GM23248 (cell line): ENCODE measurements at regions of chr9 and their contacts with region 1.

Region 1: GRCh38 chr9:124420991-124421543 is 5.8 kb upstream of the PSMB7 start:
- DNase-seq: peak; percentile 23
- H3K4me3 ChIP-seq: no peak overlapping the region
- H3K27ac ChIP-seq: no peak overlapping the region
- H3K4me1 ChIP-seq: no peaks in the 10 kb centered on the region
- H3K27me3 ChIP-seq: no peaks in the 10 kb centered on the region

Region 2: GRCh38 chr9:124098141-124099090 is 322.7 kb before region 1 on chr9:
- in situ Hi-C with region 1: no loop called
- DNase-seq: no peak
- H3K4me3 ChIP-seq: no peak overlapping the region
- H3K27ac ChIP-seq: no peak overlapping the region
- H3K4me1 ChIP-seq: no peaks in the 10 kb centered on the region
- H3K27me3 ChIP-seq: peaks cover 31% of the 10 kb centered on the region

Region 3: DNA sequence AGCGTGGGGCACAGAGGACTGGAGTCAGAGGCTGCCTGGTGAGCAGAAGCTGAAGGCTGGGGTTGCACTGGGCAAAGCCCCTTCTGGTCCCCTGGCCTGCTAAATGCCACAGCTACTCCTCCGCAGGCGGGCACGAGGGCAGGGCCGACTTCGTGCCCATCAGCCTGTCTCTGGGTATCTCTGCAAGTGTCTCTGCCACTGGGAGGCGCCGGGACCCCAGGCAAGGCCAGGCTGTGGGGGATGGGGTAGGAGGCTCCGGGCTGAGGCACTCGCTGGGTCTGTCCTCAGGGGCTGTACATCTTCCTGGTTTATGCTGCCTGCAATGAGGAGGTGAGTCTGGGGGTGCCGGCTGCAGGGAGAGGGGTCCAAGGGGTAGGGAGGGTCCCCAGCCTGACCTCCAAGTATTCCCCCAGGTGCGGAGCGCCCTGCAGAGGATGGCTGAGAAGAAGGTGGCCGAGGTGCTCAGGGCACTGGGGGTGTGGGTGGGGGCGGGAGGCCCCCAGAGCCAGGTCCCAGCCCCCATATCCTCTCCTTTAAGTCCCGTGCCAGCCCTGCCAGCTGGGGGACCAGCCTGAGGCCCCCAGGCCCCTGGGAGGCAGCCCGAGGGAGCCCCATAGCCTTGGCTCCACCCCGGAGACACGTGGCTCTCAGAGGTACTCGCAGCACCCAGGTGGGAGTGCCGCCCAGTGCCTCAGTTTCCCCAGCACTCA is 54.2 kb after region 1 on chr9:
- in situ Hi-C with region 1: no loop called
- DNase-seq: no peak
- H3K4me3 ChIP-seq: no peak overlapping the region
- H3K27ac ChIP-seq: no peak overlapping the region
- H3K4me1 ChIP-seq: no peaks in the 10 kb centered on the region
- H3K27me3 ChIP-seq: peaks cover 32% of the 10 kb centered on the region

Region 4: GRCh38 chr9:124537926-124538325 is 116.9 kb after region 1 on chr9:
- in situ Hi-C with region 1: loop called (anchors 5 kb)
- DNase-seq: no peak
- H3K4me3 ChIP-seq: no peak overlapping the region
- H3K27ac ChIP-seq: no peak overlapping the region
- H3K4me1 ChIP-seq: 0 out of 2 replicates have a peak, but pooled peaks cover 5% of the 10 kb centered on the region
- H3K27me3 ChIP-seq: 0 out of 2 replicates have a peak, but pooled peaks cover 5% of the 10 kb centered on the region